ENCODE measurements at regions of chr13 and their contacts with region 1.

Region 1: DNA sequence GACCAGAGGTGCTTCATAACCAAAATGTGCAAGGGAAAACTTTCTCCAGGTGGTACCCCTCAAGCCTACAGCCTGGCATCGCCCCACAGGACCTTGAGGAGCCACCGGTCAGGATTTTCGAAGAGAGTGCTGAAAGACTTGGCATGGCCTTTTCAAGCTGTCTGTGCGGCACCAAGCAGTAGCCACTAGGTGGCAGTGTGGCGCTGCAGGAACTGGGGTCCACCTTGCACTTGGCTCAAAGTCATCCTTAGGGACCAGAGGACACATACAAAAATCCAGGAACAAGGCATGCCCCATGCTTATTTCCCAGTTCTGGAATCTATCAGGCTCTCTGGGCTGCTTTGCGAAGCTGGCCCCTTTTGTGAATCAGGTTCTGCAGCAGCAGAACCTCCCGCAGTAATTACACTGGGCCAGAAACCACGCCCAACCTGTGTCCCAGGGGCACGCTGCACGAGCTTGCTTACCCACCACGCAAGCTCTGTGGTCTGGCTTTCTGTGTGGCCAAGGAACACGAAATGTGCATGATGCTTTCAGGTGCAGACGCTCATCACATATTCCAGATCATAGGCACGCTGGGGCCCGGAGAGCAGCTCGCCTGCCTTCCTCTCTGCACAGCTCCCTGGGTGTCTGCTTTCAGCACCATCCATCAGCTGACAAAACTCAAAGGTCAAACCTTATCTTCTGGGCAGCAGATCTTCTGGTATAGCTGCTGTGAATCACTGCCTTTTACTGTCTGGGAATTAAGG is 87.2 kb downstream of the SLC7A1 start:
- DNase-seq: peak; percentile 84
- H3K4me3 ChIP-seq: no peak overlapping the region
- H3K27ac ChIP-seq: no peak overlapping the region
- H3K4me1 ChIP-seq: no peaks in the 10 kb centered on the region
- H3K27me3 ChIP-seq: peaks cover 4 to 7% of the 10 kb centered on the region in 2 experiments
- CTCF ChIP-seq: peak; percentile 94 to 97
- POLR2A ChIP-seq: no peak

Region 2: GRCh38 chr13:28991764-28992163 is 516.5 kb before region 1 on chr13:
- CTCF ChIA-PET with region 1: no interaction called
- POLR2A ChIA-PET with region 1: no interaction called
- dilution Hi-C with region 1: no loop called
- intact Hi-C with region 1: no loop called
- DNase-seq: no peak
- H3K4me3 ChIP-seq: no peak overlapping the region
- H3K27ac ChIP-seq: no peak overlapping the region
- H3K4me1 ChIP-seq: no peaks in the 10 kb centered on the region
- H3K27me3 ChIP-seq: no peaks in the 10 kb centered on the region
- CTCF ChIP-seq: no peak
- POLR2A ChIP-seq: no peak

Region 3: DNA sequence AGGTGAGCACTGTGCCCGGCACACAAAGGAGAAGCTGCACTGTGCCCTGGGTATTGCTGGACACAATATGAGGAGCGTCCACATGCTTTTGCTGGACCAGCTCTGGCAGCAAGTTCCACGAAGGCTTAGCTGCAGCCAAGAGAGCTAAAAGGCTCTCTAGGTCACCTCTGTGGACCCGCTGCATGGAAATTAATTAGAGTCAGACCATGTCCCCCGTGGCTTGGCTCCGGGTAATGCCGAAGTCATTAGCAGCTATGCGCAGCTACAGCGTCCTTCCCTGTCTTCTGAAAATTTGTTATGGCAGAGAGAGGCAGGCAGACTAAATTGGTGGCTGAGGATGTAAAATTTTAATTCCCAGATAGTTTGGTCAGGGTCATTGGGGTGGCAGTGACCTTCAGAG is 184.3 kb before region 1 on chr13:
- CTCF ChIA-PET with region 1: no interaction called
- POLR2A ChIA-PET with region 1: no interaction called
- dilution Hi-C with region 1: no loop called
- intact Hi-C with region 1: no loop called
- DNase-seq: no peak
- H3K4me3 ChIP-seq: no peak overlapping the region
- H3K27ac ChIP-seq: no peak overlapping the region
- H3K4me1 ChIP-seq: no peaks in the 10 kb centered on the region
- H3K27me3 ChIP-seq: no peaks in the 10 kb centered on the region
- CTCF ChIP-seq: no peak
- POLR2A ChIP-seq: no peak

Region 4: GRCh38 chr13:29472332-29472961 is 35.9 kb before region 1 on chr13:
- CTCF ChIA-PET with region 1: interaction called, 18 read pairs
- POLR2A ChIA-PET with region 1: no interaction called
- dilution Hi-C with region 1: no loop called
- intact Hi-C with region 1: no loop called
- DNase-seq: peak; percentile 57
- H3K4me3 ChIP-seq: no peak overlapping the region
- H3K27ac ChIP-seq: no peak overlapping the region
- H3K4me1 ChIP-seq: no peaks in the 10 kb centered on the region
- H3K27me3 ChIP-seq: peaks cover 6 to 17% of the 10 kb centered on the region in 2 experiments
- CTCF ChIP-seq: peak; percentile 96 to 98
- POLR2A ChIP-seq: no peak

Region 5: DNA sequence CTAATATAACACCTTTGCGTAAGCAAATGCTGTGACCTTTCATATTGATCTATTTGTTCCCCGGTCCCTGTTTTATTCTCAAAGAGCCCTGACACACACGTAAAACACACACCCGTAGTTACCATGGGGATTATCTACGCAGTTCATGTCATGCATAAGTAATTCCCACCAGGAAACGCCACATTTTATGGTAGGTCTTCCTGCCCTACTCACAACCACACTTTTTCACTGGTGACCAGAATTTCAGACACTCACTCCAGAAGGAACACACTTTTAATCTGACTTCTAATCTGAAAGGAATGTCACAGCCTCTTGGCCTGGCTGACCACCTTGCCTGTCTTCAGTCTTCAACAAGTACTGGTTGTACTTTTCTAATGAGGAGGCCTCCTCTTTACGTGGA is 40.4 kb after region 1 on chr13:
- CTCF ChIA-PET with region 1: interaction called, 4 read pairs
- POLR2A ChIA-PET with region 1: no interaction called
- dilution Hi-C with region 1: no loop called
- intact Hi-C with region 1: loop called (anchors 1 kb)
- DNase-seq: peak; percentile 92
- H3K4me3 ChIP-seq: no peak overlapping the region
- H3K27ac ChIP-seq: peak overlapping the region; percentile 99
- H3K4me1 ChIP-seq: peaks cover 46% of the 10 kb centered on the region
- H3K27me3 ChIP-seq: no peaks in the 10 kb centered on the region
- CTCF ChIP-seq: no peak
- POLR2A ChIP-seq: no peak

Region 6: DNA sequence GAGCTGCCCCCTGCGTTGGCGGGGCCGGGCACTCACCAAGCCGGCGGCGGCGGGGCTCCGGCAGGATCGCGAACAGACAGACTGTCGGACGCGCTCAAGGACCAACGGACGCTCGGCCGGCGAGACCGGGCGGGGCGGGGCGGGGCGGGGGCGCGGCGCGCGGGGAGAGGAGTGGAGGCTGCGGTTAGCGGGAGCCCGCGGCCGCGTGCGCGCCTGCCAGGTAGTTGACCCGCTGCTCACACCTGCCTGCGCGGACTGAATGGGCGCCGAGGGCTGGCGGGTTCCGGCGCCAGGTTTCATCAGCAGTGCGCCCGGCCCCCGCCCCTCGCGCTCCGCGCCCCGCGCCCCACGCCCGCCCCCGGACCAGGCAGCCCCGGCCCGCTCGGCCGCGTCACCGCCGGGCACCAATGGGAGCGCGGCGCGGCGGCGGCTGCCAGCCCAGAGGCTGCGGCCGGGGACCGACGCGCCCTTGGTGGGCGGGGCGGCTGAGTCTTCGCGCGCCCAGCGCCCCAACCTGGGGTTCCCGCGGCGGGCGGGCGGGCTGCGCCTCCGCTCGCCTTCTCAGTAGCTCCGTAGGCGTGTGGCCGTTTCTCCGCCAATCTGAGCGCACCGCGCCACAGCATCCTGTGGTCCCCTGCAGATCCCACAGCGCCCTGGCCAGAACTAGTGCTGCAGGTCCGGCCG is 87.2 kb after region 1 on chr13 and contains the start of gene SLC7A1:
- CTCF ChIA-PET with region 1: interaction called, 15 read pairs
- POLR2A ChIA-PET with region 1: no interaction called
- dilution Hi-C with region 1: no loop called
- intact Hi-C with region 1: loop called (anchors 1 kb)
- DNase-seq: peak; percentile 84
- H3K4me3 ChIP-seq: peak within 1 kb of the TSS; percentile 66 to 93 (median 71)
- H3K27ac ChIP-seq: peak within 1 kb of the TSS; percentile 91
- H3K4me1 ChIP-seq: peaks cover 20% of the 10 kb centered on the region
- H3K27me3 ChIP-seq: no peaks in the 10 kb centered on the region
- CTCF ChIP-seq: peak in 1 of 2 donors; percentile 20
- POLR2A ChIP-seq: no peak
- total RNA-seq, gene SLC7A1: 79.3 and 81.2 TPM in 2 replicates

Region 7: DNA sequence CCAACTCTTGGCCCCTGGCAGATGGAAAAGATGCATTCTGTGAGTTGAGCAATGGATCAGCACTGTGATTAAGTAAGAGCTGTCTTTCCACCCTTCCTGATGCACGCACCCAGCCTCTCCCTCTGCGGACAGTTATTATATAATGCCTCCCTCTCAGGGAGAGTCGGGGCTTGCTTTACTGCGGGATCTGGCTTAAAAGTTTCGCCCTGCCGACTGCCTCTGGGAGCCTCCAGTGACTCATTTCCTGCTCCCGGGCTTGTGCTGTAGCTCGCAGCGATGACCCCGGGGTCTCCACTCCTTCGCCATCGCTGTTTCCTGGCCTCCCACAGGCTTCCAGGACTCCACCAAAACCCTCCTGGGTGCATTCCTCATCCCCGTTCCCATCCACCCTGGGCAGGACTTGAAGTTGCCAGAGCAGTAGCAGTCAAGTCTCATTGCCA is 194.6 kb after region 1 on chr13:
- CTCF ChIA-PET with region 1: interaction called, 301 read pairs
- POLR2A ChIA-PET with region 1: interaction called, 4 read pairs
- dilution Hi-C with region 1: no loop called
- intact Hi-C with region 1: loop called (anchors 1 kb)
- DNase-seq: peak; percentile 77
- H3K4me3 ChIP-seq: peak overlapping the region in 1 of 3 experiments; percentile 58
- H3K27ac ChIP-seq: peak overlapping the region; percentile 52
- H3K4me1 ChIP-seq: peaks cover 12% of the 10 kb centered on the region
- H3K27me3 ChIP-seq: no peaks in the 10 kb centered on the region
- CTCF ChIP-seq: no peak
- POLR2A ChIP-seq: no peak

Region 8: GRCh38 chr13:29923554-29924481 is 415.5 kb after region 1 on chr13:
- CTCF ChIA-PET with region 1: interaction called, 12 read pairs
- POLR2A ChIA-PET with region 1: no interaction called
- dilution Hi-C with region 1: no loop called
- intact Hi-C with region 1: no loop called
- DNase-seq: peak; percentile 93
- H3K4me3 ChIP-seq: no peak overlapping the region
- H3K27ac ChIP-seq: peak overlapping the region; percentile 62
- H3K4me1 ChIP-seq: peaks cover 17% of the 10 kb centered on the region
- H3K27me3 ChIP-seq: no peaks in the 10 kb centered on the region
- CTCF ChIP-seq: peak; percentile 94 to 96
- POLR2A ChIP-seq: no peak

Region 9: GRCh38 chr13:30045916-30046704 is 537.8 kb after region 1 on chr13:
- CTCF ChIA-PET with region 1: no interaction called
- POLR2A ChIA-PET with region 1: no interaction called
- dilution Hi-C with region 1: no loop called
- intact Hi-C with region 1: no loop called
- DNase-seq: no peak
- H3K4me3 ChIP-seq: no peak overlapping the region
- H3K27ac ChIP-seq: no peak overlapping the region
- H3K4me1 ChIP-seq: no peaks in the 10 kb centered on the region
- H3K27me3 ChIP-seq: no peaks in the 10 kb centered on the region
- CTCF ChIP-seq: no peak
- POLR2A ChIP-seq: no peak

Region 10: DNA sequence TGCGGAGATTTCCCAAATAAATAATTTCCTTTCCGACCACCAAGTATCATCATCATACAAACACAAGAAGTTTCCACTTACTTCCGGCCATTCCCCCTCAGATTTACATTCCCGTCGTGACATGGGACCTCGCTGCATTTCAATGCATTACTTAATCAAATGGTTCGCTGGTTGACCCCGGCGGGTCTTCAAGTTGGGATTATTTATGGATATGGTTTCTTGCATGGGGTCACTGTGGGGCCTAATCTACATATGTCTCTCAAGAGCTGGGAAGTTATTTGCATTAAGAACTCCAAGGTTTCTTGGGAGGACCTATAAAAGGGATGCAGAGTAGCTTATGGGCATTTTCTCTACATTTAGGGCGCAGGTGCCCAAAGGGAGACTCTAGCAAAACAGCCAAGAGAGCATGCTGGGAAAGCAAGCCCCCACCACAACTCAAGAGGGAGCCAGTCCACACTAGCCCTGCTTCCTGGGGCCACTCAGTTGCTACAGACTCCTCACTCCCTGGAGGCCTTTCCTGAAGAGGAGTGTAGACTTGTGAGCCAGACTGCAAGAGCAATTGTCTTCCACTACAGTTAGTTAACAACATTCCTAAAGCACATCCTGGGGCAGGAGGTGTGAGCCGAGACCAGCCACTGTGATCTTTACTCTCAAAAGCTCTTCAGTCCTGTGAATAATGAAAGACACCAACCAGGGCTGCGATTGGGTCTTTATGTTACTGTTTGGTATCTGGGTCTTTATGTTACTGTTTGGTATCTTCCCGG is 673.8 kb after region 1 on chr13:
- CTCF ChIA-PET with region 1: no interaction called
- POLR2A ChIA-PET with region 1: no interaction called
- dilution Hi-C with region 1: no loop called
- intact Hi-C with region 1: no loop called
- DNase-seq: no peak
- H3K4me3 ChIP-seq: no peak overlapping the region
- H3K27ac ChIP-seq: no peak overlapping the region
- H3K4me1 ChIP-seq: no peaks in the 10 kb centered on the region
- H3K27me3 ChIP-seq: peaks cover 0 to 5% of the 10 kb centered on the region in 2 experiments
- CTCF ChIP-seq: no peak
- POLR2A ChIP-seq: no peak

Measured in endothelial cell of umbilical vein (primary cell).